ENCODE measurements at regions of chr11 and their contacts with region 1.

Region 1: GRCh38 chr11:8964324-8965320 is at the start of gene TMEM9B:
- DNase-seq: peak; percentile 35 to 85 (median 66)
- ATAC-seq: peak; percentile 90
- H3K4me3 ChIP-seq: peak within 1 kb of the TSS; percentile 96
- H3K4me3 Mint-ChIP-seq: peak within 1 kb of the TSS; percentile 94 to 99 (median 98)
- H3K27ac ChIP-seq: peak within 1 kb of the TSS; percentile 92
- H3K27ac Mint-ChIP-seq: peak within 1 kb of the TSS; percentile 94 to 99 (median 98)
- H3K4me1 ChIP-seq: peaks cover 13 to 17% of the 10 kb centered on the region in 2 donors
- H3K4me1 Mint-ChIP-seq: peaks cover 17 to 45% (median 32%) of the 10 kb centered on the region in 7 donors
- H3K27me3 ChIP-seq: no peaks in the 10 kb centered on the region
- H3K27me3 Mint-ChIP-seq: no peaks in the 10 kb centered on the region
- total RNA-seq, gene TMEM9B: 16.2 to 33.6 (median 30.6) TPM

Region 2: DNA sequence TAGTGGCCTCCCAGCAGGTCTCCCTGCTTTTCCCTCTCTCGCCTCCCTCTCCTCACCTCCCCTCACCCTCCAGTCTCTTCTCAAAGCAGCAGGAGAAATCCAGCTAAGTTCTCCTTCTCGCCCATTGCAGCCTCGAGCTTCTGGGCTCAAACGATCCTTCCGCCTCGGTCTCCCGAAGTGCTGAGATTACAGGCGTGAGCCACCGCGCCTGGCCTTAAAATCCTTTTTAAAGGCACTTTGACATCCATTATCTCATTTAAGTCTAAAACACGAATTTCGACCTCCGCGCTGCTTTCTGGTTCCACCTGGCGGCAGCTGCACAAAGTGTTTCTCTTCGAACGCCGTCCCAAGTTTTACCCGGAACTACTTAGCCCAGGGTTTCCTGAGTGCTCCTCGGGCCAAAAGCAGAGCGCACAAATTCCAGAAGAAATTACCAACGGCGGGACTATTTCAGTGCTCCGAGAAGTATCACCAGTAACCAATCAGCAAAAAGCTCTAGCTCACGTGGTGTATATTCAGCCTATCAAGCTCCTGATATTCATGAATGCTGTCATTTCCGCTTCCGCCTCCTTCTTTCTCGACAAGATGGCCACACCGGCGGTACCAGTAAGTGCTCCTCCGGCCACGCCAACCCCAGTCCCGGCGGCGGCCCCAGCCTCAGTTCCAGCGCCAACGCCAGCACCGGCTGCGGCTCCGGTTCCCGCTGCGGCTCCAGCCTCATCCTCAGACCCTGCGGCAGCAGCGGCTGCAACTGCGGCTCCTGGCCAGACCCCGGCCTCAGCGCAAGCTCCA is 977.7 kb before region 1 on chr11 and contains the start of gene EIF3F:
- CTCF ChIA-PET with region 1: no interaction called
- POLR2A ChIA-PET with region 1: no interaction called
- intact Hi-C with region 1: loop called in 1 of 2 experiments (anchors 5 kb)
- DNase-seq: peak; percentile 64 to 98 (median 95)
- ATAC-seq: peak; percentile 98
- H3K4me3 ChIP-seq: peak within 1 kb of the TSS; percentile 70
- H3K4me3 Mint-ChIP-seq: peak within 1 kb of the TSS; percentile 85 to 99 (median 92)
- H3K27ac ChIP-seq: peak within 1 kb of the TSS; percentile 78
- H3K27ac Mint-ChIP-seq: peak within 1 kb of the TSS; percentile 88 to 100 (median 97)
- H3K4me1 ChIP-seq: peaks cover 20 to 31% of the 10 kb centered on the region in 2 donors
- H3K4me1 Mint-ChIP-seq: peaks cover 29 to 64% (median 49%) of the 10 kb centered on the region in 7 donors
- H3K27me3 ChIP-seq: no peaks in the 10 kb centered on the region
- H3K27me3 Mint-ChIP-seq: no peaks in the 10 kb centered on the region
- total RNA-seq, gene EIF3F: 222 to 405 (median 353) TPM

Region 3: DNA sequence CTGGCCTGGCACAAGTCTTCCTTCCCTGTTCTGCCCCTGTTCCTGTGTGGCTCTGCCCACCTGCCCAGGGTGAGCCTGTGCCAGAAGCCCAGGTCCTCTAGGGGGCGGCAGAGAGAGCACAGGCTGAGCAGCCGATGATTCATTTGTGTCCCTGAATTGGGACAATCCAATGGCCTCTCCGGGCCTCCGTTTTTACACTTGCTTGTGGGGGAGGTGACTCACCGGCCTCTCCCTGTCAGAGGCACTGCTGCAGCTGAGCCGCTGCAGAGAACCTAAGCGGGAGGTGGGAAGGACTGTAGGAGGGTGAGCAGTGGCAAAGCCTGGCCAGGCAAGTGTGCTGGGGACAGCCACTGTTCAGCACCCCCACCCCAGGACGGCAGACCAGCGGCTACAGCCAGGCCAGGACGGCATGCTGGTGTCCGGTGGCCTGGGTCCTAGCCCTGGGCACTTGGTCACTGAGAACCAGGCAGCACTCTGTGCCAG is 635.7 kb before region 1 on chr11:
- CTCF ChIA-PET with region 1: no interaction called
- POLR2A ChIA-PET with region 1: no interaction called
- intact Hi-C with region 1: loop called in 1 of 2 experiments (anchors 5 kb)
- DNase-seq: peak in 7 of 9 donors; percentile 5 to 74 (median 17)
- ATAC-seq: peak; percentile 78
- H3K4me3 ChIP-seq: no peak overlapping the region
- H3K4me3 Mint-ChIP-seq: no peak overlapping the region
- H3K27ac ChIP-seq: no peak overlapping the region
- H3K27ac Mint-ChIP-seq: no peak overlapping the region
- H3K4me1 ChIP-seq: no peaks in the 10 kb centered on the region
- H3K4me1 Mint-ChIP-seq: peaks cover 0 to 4% (median 0%) of the 10 kb centered on the region in 7 donors
- H3K27me3 ChIP-seq: no peaks in the 10 kb centered on the region
- H3K27me3 Mint-ChIP-seq: peaks cover 0 to 8% (median 4%) of the 10 kb centered on the region in 5 donors

Region 4: DNA sequence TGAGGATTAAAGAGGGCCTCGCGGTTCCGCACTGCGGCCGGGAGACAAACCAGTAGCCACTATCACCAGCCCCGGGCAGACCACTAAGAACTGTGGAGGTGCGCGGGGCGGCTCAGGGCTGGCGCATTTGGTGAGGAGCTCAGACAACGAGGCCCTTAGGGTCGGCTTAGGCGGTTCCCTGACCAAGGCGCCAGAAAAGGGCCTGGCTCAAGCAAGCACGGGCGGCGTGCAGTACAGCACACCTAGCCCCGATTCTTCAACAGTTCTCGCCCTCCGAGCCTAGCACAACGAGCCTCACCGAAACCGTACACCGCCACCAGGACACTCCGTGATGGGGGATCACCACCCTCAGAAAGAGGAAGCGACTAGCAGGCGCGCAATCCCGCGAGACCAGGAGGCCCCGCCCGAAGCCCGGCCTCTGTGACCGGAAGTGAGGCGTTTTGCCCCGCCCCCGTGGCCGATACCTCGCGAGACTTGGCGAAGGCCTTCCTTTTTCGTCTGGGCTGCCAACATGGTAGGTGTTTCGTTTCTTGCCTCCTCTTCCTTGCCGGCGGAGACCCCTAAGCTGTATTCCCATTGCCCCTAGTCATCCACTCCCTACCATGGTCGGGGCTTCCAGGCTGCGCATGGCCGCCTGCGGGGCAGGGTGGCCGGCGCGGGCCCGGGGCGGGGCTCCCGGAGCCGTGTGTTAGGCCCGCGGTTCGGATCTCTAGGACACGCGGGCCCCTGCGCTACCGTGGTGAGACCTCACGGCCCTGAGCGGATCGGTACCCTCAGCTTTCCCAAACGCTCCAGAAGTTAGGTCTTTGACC is 282.1 kb before region 1 on chr11 and contains the starts of genes RPL27A and TRIM66:
- CTCF ChIA-PET with region 1: interaction called, 3 read pairs
- POLR2A ChIA-PET with region 1: interaction called, 27 read pairs
- intact Hi-C with region 1: loop called (anchors 1 kb)
- DNase-seq: peak; percentile 97 to 100 (median 99)
- ATAC-seq: peak; percentile 98
- H3K4me3 ChIP-seq: peak within 1 kb of the TSS; percentile 73
- H3K4me3 Mint-ChIP-seq: peak within 1 kb of the TSS; percentile 89 to 97 (median 96)
- H3K27ac ChIP-seq: peak within 1 kb of the TSS; percentile 99
- H3K27ac Mint-ChIP-seq: peak within 1 kb of the TSS; percentile 97 to 99 (median 98)
- H3K4me1 ChIP-seq: peaks cover 17% of the 10 kb centered on the region in 2 donors
- H3K4me1 Mint-ChIP-seq: peaks cover 30 to 57% (median 43%) of the 10 kb centered on the region in 7 donors
- H3K27me3 ChIP-seq: no peaks in the 10 kb centered on the region
- H3K27me3 Mint-ChIP-seq: no peaks in the 10 kb centered on the region
- total RNA-seq, gene RPL27A: 758 to 2,116 (median 1,670) TPM
- total RNA-seq, gene TRIM66: 16.0 to 37.6 (median 24.2) TPM

Region 5: DNA sequence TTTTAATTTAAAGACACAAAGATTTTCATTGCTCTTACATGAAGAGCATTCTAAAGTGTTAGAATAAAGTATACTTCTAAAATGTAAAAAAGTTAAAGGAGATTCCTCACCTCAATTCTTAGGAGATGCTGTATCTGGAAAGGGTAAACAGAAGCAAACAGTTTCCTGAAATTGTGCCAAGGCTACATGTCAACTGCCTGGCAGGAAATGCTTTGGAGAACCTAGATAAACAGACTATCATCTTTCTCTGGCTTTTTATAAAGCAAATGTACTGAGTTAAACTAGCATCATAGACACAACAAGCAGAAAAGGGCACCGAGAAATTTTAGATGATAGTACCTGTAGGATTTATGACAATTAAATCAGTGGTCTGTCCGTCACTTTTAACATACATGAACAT is 78.3 kb before region 1 on chr11:
- CTCF ChIA-PET with region 1: no interaction called
- POLR2A ChIA-PET with region 1: no interaction called
- intact Hi-C with region 1: no loop called
- DNase-seq: no peak
- ATAC-seq: no peak
- H3K4me3 ChIP-seq: no peak overlapping the region
- H3K4me3 Mint-ChIP-seq: no peak overlapping the region
- H3K27ac ChIP-seq: no peak overlapping the region
- H3K27ac Mint-ChIP-seq: no peak overlapping the region
- H3K4me1 ChIP-seq: no peaks in the 10 kb centered on the region
- H3K4me1 Mint-ChIP-seq: no peaks in the 10 kb centered on the region
- H3K27me3 ChIP-seq: no peaks in the 10 kb centered on the region
- H3K27me3 Mint-ChIP-seq: peaks cover 0 to 37% (median 25%) of the 10 kb centered on the region in 5 donors

Region 6: DNA sequence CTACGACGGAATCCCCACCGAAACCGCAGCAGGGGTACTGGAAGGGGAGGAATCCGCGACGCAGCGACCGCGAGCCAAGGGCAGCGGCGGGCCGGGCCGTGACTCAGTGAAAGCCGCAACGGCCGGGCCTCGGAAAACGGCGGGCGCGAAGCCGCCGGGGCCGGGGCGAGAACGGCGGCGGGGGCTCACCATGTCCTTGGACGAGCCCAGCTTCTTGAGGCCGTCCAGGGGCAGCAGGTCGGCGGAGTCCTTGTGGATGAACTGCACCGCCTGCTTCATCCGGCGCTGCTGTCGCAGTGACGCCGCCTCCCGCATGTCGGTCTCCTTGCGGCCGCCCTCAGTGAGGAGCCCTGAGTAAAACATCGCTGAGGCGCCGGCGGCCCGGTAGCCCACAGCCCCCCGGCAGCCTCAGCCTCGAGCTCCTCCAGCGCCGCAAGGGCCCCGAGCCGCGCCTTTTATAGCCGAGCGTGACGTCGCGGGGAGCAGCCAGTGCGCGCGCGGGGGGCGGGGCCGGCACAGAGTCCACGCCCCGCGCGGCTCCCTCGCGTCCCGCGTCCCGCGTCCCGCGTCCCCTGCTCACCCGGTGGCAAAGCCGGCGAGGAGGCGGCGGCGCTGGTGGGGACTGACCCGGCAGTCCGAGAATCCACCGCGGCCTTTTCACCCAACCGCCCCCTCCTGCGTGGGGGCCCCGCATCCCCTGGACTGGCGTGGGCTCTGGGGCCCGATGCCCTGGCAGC is 39.1 kb after region 1 on chr11 and contains the start of gene NRIP3:
- CTCF ChIA-PET with region 1: interaction called, 4 read pairs
- POLR2A ChIA-PET with region 1: no interaction called
- intact Hi-C with region 1: loop called (anchors 1 kb)
- DNase-seq: peak; percentile 72 to 86 (median 80)
- ATAC-seq: peak; percentile 89
- H3K4me3 ChIP-seq: peak within 1 kb of the TSS; percentile 32
- H3K4me3 Mint-ChIP-seq: peak within 1 kb of the TSS; percentile 81 to 90 (median 86)
- H3K27ac ChIP-seq: no peak within 1 kb of the TSS
- H3K27ac Mint-ChIP-seq: peak within 1 kb of the TSS; percentile 12 to 87 (median 62)
- H3K4me1 ChIP-seq: peaks cover 8 to 12% of the 10 kb centered on the region in 2 donors
- H3K4me1 Mint-ChIP-seq: peaks cover 13 to 31% (median 20%) of the 10 kb centered on the region in 7 donors
- H3K27me3 ChIP-seq: peaks cover 3 to 8% of the 10 kb centered on the region in 2 donors
- H3K27me3 Mint-ChIP-seq: peaks cover 30 to 56% (median 41%) of the 10 kb centered on the region in 5 donors
- total RNA-seq, gene NRIP3: 0.59 to 11.0 (median 3.4) TPM

Region 7: GRCh38 chr11:9384535-9385303 is 420.1 kb after region 1 on chr11 and contains the start of gene IPO7:
- CTCF ChIA-PET with region 1: no interaction called
- POLR2A ChIA-PET with region 1: interaction called, 4 read pairs
- intact Hi-C with region 1: loop called (anchors 1 kb)
- DNase-seq: peak; percentile 68 to 88 (median 84)
- ATAC-seq: peak; percentile 99
- H3K4me3 ChIP-seq: peak within 1 kb of the TSS; percentile 78
- H3K4me3 Mint-ChIP-seq: peak within 1 kb of the TSS; percentile 89 to 98 (median 94)
- H3K27ac ChIP-seq: peak within 1 kb of the TSS; percentile 88
- H3K27ac Mint-ChIP-seq: peak within 1 kb of the TSS; percentile 79 to 94 (median 91)
- H3K4me1 ChIP-seq: peaks cover 11 to 15% of the 10 kb centered on the region in 2 donors
- H3K4me1 Mint-ChIP-seq: peaks cover 25 to 51% (median 38%) of the 10 kb centered on the region in 7 donors
- H3K27me3 ChIP-seq: no peaks in the 10 kb centered on the region
- H3K27me3 Mint-ChIP-seq: no peaks in the 10 kb centered on the region
- total RNA-seq, gene IPO7: 47.3 to 105 (median 61.3) TPM

Region 8: DNA sequence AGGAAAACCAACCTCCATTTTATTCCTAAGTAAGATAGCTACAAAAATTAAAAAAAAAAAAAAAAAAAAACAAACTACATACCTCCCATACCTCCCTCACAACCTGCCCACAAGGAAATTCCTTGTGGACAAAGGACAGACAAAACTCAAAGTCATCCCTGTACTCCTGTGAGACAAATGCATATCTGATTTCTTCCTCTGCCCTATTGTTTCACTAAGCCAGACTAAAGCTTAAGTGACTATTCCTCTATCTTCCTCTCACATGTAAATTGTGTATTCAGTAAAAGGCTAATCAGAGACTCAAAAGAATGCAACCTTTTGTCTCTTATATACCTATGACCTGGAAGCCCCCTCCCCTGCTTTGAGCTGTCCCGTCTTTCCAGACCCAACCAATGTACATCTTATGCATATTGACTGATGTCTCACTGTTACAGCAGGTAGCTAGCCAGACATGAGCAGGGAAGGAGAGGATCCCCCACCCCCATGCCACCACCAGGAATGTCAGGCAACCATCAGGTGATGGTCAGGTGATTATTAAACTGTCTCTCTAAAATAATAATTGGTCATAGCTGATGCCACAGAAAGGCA is 1040.0 kb after region 1 on chr11:
- CTCF ChIA-PET with region 1: no interaction called
- POLR2A ChIA-PET with region 1: no interaction called
- intact Hi-C with region 1: no loop called
- DNase-seq: no peak
- ATAC-seq: no peak
- H3K4me3 ChIP-seq: no peak overlapping the region
- H3K4me3 Mint-ChIP-seq: no peak overlapping the region
- H3K27ac ChIP-seq: no peak overlapping the region
- H3K27ac Mint-ChIP-seq: no peak overlapping the region
- H3K4me1 ChIP-seq: no peaks in the 10 kb centered on the region
- H3K4me1 Mint-ChIP-seq: peaks cover 0 to 1% (median 0%) of the 10 kb centered on the region in 7 donors
- H3K27me3 ChIP-seq: no peaks in the 10 kb centered on the region
- H3K27me3 Mint-ChIP-seq: no peaks in the 10 kb centered on the region